MCF 10A (cell line): ENCODE measurements at regions of chr1 and their contacts with region 1.

Region 1: DNA sequence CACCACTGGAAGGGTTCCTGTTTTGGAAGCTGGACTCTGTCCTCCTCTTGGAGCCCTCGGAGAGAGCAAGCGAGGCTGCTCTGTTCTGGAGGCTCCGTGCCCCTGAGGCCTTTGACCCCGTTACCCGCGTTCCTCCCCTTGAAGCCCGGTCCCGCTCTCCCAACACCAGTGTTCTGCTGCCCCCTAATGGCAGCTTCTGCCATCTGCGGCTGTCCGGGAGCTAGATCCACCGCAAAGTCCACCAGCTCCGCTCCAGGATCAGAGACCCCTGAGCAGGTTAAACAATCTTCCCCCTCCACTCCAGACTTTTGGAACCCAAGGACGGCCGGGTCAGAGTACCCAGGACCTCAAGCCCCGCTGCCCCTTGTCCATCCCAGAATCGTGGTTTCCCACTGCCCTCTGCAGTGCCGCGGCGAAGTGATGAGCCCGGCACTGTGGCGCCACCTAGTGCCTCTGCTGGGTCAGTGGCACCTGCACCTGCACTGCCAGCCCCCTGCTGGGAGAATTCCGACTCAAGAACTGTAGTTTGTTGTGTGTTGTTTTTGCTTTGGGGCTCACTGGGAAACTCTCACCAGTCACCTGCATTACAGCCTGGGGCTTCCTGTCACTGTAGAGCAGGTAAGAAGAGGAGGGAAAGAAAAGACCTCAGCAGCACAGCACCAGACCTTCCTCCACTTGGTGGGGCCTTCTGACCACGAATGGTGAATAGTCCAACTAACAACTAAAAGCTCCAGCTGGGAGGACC is 63.5 kb upstream of the NFASC start:
- DNase-seq: peak; percentile 94
- H3K4me3 Mint-ChIP-seq: peak overlapping the region; percentile 69
- H3K27ac Mint-ChIP-seq: no peak overlapping the region
- H3K4me1 Mint-ChIP-seq: no peaks in the 10 kb centered on the region
- H3K27me3 Mint-ChIP-seq: peaks cover 25% of the 10 kb centered on the region
- CTCF ChIP-seq: peak; percentile 99

Region 2: GRCh38 chr1:204411451-204412204 is 395.5 kb before region 1 on chr1 and contains the start of gene PPP1R15B:
- CTCF ChIA-PET with region 1: interaction called, 10 read pairs
- POLR2A ChIA-PET with region 1: no interaction called
- intact Hi-C with region 1: no loop called
- DNase-seq: peak; percentile 100
- H3K4me3 Mint-ChIP-seq: peak within 1 kb of the TSS; percentile 100
- H3K27ac Mint-ChIP-seq: peak within 1 kb of the TSS; percentile 100
- H3K4me1 Mint-ChIP-seq: peaks cover 18% of the 10 kb centered on the region
- H3K27me3 Mint-ChIP-seq: no peaks in the 10 kb centered on the region
- CTCF ChIP-seq: no peak
- total RNA-seq, gene PPP1R15B: 86.0 and 94.8 TPM in 2 replicates

Region 3: DNA sequence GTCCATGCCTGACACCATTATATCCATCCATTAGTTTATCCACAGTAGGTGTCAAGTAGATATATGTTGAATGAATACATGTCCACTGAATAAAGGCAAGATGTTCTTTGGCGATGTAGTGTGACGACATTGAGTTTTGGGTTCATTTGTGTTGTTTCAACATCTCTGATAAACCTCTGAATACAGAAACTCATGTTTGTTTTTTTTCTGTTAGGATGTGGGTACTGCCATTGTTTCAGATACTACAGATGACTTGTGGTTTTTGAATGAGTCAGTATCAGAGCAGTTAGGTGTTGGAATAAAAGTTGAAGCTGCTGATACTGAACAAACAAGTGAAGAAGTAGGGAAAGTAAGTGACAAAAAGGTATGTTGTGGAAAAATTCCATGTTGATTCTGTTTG is 262.8 kb before region 1 on chr1:
- CTCF ChIA-PET with region 1: interaction called, 1,156 read pairs
- POLR2A ChIA-PET with region 1: no interaction called
- intact Hi-C with region 1: no loop called
- DNase-seq: peak; percentile 70
- H3K4me3 Mint-ChIP-seq: no peak overlapping the region
- H3K27ac Mint-ChIP-seq: peak overlapping the region; percentile 21
- H3K4me1 Mint-ChIP-seq: peaks cover 24% of the 10 kb centered on the region
- H3K27me3 Mint-ChIP-seq: no peaks in the 10 kb centered on the region
- CTCF ChIP-seq: no peak

Region 4: GRCh38 chr1:204651843-204652421 is 155.2 kb before region 1 on chr1:
- CTCF ChIA-PET with region 1: interaction called, 19 read pairs
- POLR2A ChIA-PET with region 1: interaction called, 4 read pairs
- intact Hi-C with region 1: no loop called
- DNase-seq: no peak
- H3K4me3 Mint-ChIP-seq: no peak overlapping the region
- H3K27ac Mint-ChIP-seq: no peak overlapping the region
- H3K4me1 Mint-ChIP-seq: peaks cover 7% of the 10 kb centered on the region
- H3K27me3 Mint-ChIP-seq: peaks cover 53% of the 10 kb centered on the region
- CTCF ChIP-seq: no peak

Region 5: GRCh38 chr1:204746838-204747442 is 60.2 kb before region 1 on chr1:
- CTCF ChIA-PET with region 1: interaction called, 29 read pairs
- POLR2A ChIA-PET with region 1: interaction called, 3 read pairs
- intact Hi-C with region 1: no loop called
- DNase-seq: peak; percentile 79
- H3K4me3 Mint-ChIP-seq: no peak overlapping the region
- H3K27ac Mint-ChIP-seq: no peak overlapping the region
- H3K4me1 Mint-ChIP-seq: no peaks in the 10 kb centered on the region
- H3K27me3 Mint-ChIP-seq: peaks cover 48% of the 10 kb centered on the region
- CTCF ChIP-seq: peak; percentile 99

Region 6: GRCh38 chr1:204842892-204843291 is 35.8 kb after region 1 on chr1:
- CTCF ChIA-PET with region 1: interaction called, 12 read pairs
- POLR2A ChIA-PET with region 1: no interaction called
- intact Hi-C with region 1: no loop called
- DNase-seq: no peak
- H3K4me3 Mint-ChIP-seq: no peak overlapping the region
- H3K27ac Mint-ChIP-seq: no peak overlapping the region
- H3K4me1 Mint-ChIP-seq: no peaks in the 10 kb centered on the region
- H3K27me3 Mint-ChIP-seq: peaks cover 73% of the 10 kb centered on the region
- CTCF ChIP-seq: no peak

Region 7: GRCh38 chr1:204968951-204969350 is 161.8 kb after region 1 on chr1:
- CTCF ChIA-PET with region 1: interaction called, 16 read pairs
- POLR2A ChIA-PET with region 1: no interaction called
- intact Hi-C with region 1: no loop called
- DNase-seq: no peak
- H3K4me3 Mint-ChIP-seq: no peak overlapping the region
- H3K27ac Mint-ChIP-seq: no peak overlapping the region
- H3K4me1 Mint-ChIP-seq: peaks cover 8% of the 10 kb centered on the region
- H3K27me3 Mint-ChIP-seq: peaks cover 92% of the 10 kb centered on the region
- CTCF ChIP-seq: no peak